A549 (cell line): ENCODE measurements at regions of chr12 and their contacts with region 1.

Region 1: GRCh38 chr12:546921-547845 is 87.4 kb downstream of the B4GALNT3 start:
- DNase-seq: peak; percentile 74 to 78
- ATAC-seq: peak; percentile 77 to 91
- H3K4me3 ChIP-seq: peak overlapping the region; percentile 9; the same call in 1 of the 3 replicates
- H3K27ac ChIP-seq: peak overlapping the region in 1 of 2 experiments; percentile 44; a peak in 1 of 6 replicates
- H3K4me1 ChIP-seq: peaks cover 13% of the 10 kb centered on the region; the same call in 2 of the 3 replicates
- CTCF ChIP-seq: peak; percentile 94
- EP300 ChIP-seq: no peak
- POLR2A ChIP-seq: no peak
- RAD21 ChIP-seq: peak; percentile 97 to 99

Region 2: GRCh38 chr12:422526-422925 is 124.7 kb before region 1 on chr12:
- CTCF ChIA-PET with region 1: interaction called, 30 read pairs
- POLR2A ChIA-PET with region 1: no interaction called
- DNase-seq: no peak
- ATAC-seq: no peak
- H3K4me3 ChIP-seq: no peak overlapping the region
- H3K27ac ChIP-seq: no peak overlapping the region
- H3K4me1 ChIP-seq: no peaks in the 10 kb centered on the region
- CTCF ChIP-seq: no peak
- EP300 ChIP-seq: no peak
- POLR2A ChIP-seq: no peak
- RAD21 ChIP-seq: no peak

Region 3: GRCh38 chr12:459430-460258 is 87.5 kb before region 1 on chr12 and contains the start of gene B4GALNT3:
- CTCF ChIA-PET with region 1: interaction called, 103 read pairs
- POLR2A ChIA-PET with region 1: no interaction called
- DNase-seq: peak; percentile 32 to 56
- ATAC-seq: peak; percentile 61 to 70
- H3K4me3 ChIP-seq: peak within 1 kb of the TSS; percentile 77
- H3K27ac ChIP-seq: peak within 1 kb of the TSS; percentile 62 to 87; a peak in 5 of 6 replicates
- H3K4me1 ChIP-seq: peaks cover 5% of the 10 kb centered on the region; the same call in 2 of the 3 replicates
- CTCF ChIP-seq: no peak
- EP300 ChIP-seq: no peak
- POLR2A ChIP-seq: no peak
- RAD21 ChIP-seq: no peak
- polyA plus RNA-seq, gene B4GALNT3: 0.53 and 0.79 TPM in 2 replicates

Region 4: GRCh38 chr12:495466-495865 is 51.7 kb before region 1 on chr12:
- CTCF ChIA-PET with region 1: interaction called, 14 read pairs
- POLR2A ChIA-PET with region 1: no interaction called
- DNase-seq: no peak
- ATAC-seq: no peak
- H3K4me3 ChIP-seq: no peak overlapping the region
- H3K27ac ChIP-seq: no peak overlapping the region
- H3K4me1 ChIP-seq: no peaks in the 10 kb centered on the region
- CTCF ChIP-seq: no peak
- EP300 ChIP-seq: no peak
- POLR2A ChIP-seq: no peak
- RAD21 ChIP-seq: no peak

Region 5: GRCh38 chr12:510071-510825 is 36.9 kb before region 1 on chr12:
- CTCF ChIA-PET with region 1: interaction called, 13 read pairs
- POLR2A ChIA-PET with region 1: no interaction called
- DNase-seq: peak in 1 of 2 experiments; percentile 18
- ATAC-seq: peak; percentile 61 to 65
- H3K4me3 ChIP-seq: no peak overlapping the region
- H3K27ac ChIP-seq: no peak overlapping the region
- H3K4me1 ChIP-seq: 0 out of 3 replicates have a peak, but pooled peaks cover 16% of the 10 kb centered on the region
- CTCF ChIP-seq: no peak
- EP300 ChIP-seq: no peak
- POLR2A ChIP-seq: no peak
- RAD21 ChIP-seq: no peak

Region 6: GRCh38 chr12:561908-562593 is 14.9 kb after region 1 on chr12:
- CTCF ChIA-PET with region 1: interaction called, 19 read pairs
- POLR2A ChIA-PET with region 1: no interaction called
- DNase-seq: no peak
- ATAC-seq: no peak
- H3K4me3 ChIP-seq: no peak overlapping the region
- H3K27ac ChIP-seq: no peak overlapping the region
- H3K4me1 ChIP-seq: no peaks in the 10 kb centered on the region
- CTCF ChIP-seq: no peak
- EP300 ChIP-seq: no peak
- POLR2A ChIP-seq: no peak
- RAD21 ChIP-seq: no peak

Region 7: GRCh38 chr12:759628-760027 is 212.4 kb after region 1 on chr12:
- CTCF ChIA-PET with region 1: no interaction called
- POLR2A ChIA-PET with region 1: no interaction called
- DNase-seq: no peak
- ATAC-seq: no peak
- H3K4me3 ChIP-seq: no peak overlapping the region
- H3K27ac ChIP-seq: 0 out of 6 replicates have a peak overlapping the region, but pooled peaks of 1 of the 2 experiments have one; percentile 1
- H3K4me1 ChIP-seq: peaks cover 51% of the 10 kb centered on the region
- CTCF ChIP-seq: no peak
- EP300 ChIP-seq: no peak
- POLR2A ChIP-seq: no peak
- RAD21 ChIP-seq: no peak